Left cardiac atrium (tissue), 4 donors: ENCODE measurements at regions of chr1 and their contacts with region 1.

Region 1: GRCh38 chr1:25624156-25624555 is 7.6 kb downstream of the MAN1C1 start:
- DNase-seq: no peak
- ATAC-seq: no peak

Region 2: DNA sequence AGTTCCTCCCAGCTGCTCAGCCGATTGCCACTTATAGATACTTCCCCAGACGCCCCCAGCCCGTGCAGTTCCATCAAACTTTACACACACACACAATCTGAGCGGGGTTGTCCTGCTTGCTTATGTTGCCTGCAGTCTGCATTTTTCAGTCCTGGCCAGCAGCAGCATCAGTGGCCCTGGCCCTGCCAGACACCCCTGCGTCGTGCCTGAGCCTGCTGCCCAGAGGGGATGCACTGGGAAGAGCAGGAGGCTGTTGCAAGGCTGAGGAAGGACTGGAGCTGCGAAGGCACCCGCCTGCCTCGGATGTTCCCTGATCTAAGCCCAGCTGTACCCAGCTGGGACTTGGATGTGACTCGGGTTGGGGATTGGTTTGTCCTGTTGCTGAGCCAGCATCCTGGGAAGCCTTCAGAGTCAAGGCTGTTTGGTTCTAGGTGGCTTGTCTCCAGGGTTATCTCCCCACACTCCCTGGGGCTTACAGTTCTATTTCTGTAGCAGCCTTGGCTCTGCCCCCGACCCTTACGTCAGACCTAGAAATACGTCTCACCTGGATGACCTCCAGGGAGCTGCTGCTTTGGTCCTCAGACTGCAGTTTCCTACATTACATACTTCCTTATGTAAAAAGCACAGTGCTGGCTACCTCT is 34.8 kb after region 1 on chr1:
- intact Hi-C with region 1: loop called in 1 of 2 experiments (anchors 5 kb)
- DNase-seq: peak; percentile 76
- ATAC-seq: peak; percentile 93 to 94

Region 3: DNA sequence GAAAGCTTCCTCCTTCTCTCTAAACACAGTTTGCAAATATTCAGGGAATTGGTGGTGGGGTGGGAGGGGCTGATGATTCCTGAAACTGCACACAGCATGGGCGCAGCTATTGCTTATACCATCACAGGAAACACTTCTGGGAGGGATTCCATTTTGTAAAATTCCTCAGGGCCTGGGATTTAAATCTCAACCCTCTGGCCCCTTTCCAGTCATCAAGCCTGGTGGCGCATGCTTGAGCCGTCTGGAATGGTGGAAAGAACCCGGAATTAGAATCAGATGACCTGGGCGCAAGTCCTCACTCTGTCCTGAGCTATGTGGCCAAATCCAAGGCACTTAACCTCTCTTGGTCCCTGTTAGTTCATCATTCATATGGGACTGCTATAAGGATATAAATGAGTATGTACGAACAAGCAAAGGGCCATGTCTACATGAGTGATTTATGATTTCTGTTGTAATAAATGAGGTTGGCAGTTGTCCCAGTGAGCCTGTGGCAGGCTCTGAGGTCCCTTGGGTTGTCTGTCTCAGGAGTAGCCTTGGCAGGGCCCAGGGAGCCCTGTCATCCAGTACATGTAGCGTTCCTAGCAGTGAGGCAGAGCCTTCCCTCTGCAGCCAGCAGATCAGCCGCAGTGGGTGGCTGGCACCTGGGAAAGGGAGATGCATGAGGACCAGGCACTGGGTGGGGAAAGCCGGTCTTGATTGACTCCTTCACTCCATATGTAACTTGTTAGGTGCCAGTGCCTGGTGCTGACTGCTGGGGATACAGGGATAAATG is 64.4 kb after region 1 on chr1:
- intact Hi-C with region 1: loop called in 1 of 2 experiments (anchors 10 kb)
- DNase-seq: no peak
- ATAC-seq: peak; percentile 32 to 41